ENCODE measurements at regions of chr1 and their contacts with region 1.

Region 1: GRCh38 chr1:100249537-100250257 is at the start of gene DBT:
- DNase-seq: peak; percentile 80 to 95
- ATAC-seq: peak; percentile 99 to 100 (median 100)
- H3K4me3 ChIP-seq: peak within 1 kb of the TSS; percentile 84
- H3K4me3 Mint-ChIP-seq: no peak within 1 kb of the TSS
- H3K27ac ChIP-seq: peak within 1 kb of the TSS; percentile 74
- H3K27ac Mint-ChIP-seq: no peak within 1 kb of the TSS
- H3K4me1 ChIP-seq: peaks cover 7% of the 10 kb centered on the region
- H3K4me1 Mint-ChIP-seq: peaks cover 0 to 10% of the 10 kb centered on the region in 2 donors
- H3K27me3 ChIP-seq: no peaks in the 10 kb centered on the region
- H3K27me3 Mint-ChIP-seq: peaks cover 3 to 10% of the 10 kb centered on the region in 2 donors
- CTCF ChIP-seq: no peak
- total RNA-seq, gene DBT: 9.9 to 11.5 (median 10.2) TPM

Region 2: GRCh38 chr1:100229681-100230443 is 19.8 kb before region 1 on chr1:
- intact Hi-C with region 1: no loop called
- DNase-seq: no peak
- ATAC-seq: no peak
- H3K4me3 ChIP-seq: no peak overlapping the region
- H3K4me3 Mint-ChIP-seq: no peak overlapping the region
- H3K27ac ChIP-seq: no peak overlapping the region
- H3K27ac Mint-ChIP-seq: no peak overlapping the region
- H3K4me1 ChIP-seq: no peaks in the 10 kb centered on the region
- H3K4me1 Mint-ChIP-seq: no peaks in the 10 kb centered on the region
- H3K27me3 ChIP-seq: no peaks in the 10 kb centered on the region
- H3K27me3 Mint-ChIP-seq: no peaks in the 10 kb centered on the region
- CTCF ChIP-seq: no peak

Region 3: GRCh38 chr1:100265931-100266740 is 16.4 kb after region 1 on chr1 and contains the start of gene RTCA:
- intact Hi-C with region 1: loop called (anchors 1 kb)
- DNase-seq: peak; percentile 93 to 99
- ATAC-seq: peak; percentile 93 to 98 (median 94)
- H3K4me3 ChIP-seq: peak within 1 kb of the TSS; percentile 86
- H3K4me3 Mint-ChIP-seq: peak within 1 kb of the TSS; percentile 100
- H3K27ac ChIP-seq: peak within 1 kb of the TSS; percentile 77
- H3K27ac Mint-ChIP-seq: peak within 1 kb of the TSS; percentile 97 to 99
- H3K4me1 ChIP-seq: peaks cover 32% of the 10 kb centered on the region
- H3K4me1 Mint-ChIP-seq: peaks cover 46 to 47% of the 10 kb centered on the region in 2 donors
- H3K27me3 ChIP-seq: no peaks in the 10 kb centered on the region
- H3K27me3 Mint-ChIP-seq: no peaks in the 10 kb centered on the region
- CTCF ChIP-seq: no peak
- total RNA-seq, gene RTCA: 49.3 to 60.8 (median 52.3) TPM

Region 4: DNA sequence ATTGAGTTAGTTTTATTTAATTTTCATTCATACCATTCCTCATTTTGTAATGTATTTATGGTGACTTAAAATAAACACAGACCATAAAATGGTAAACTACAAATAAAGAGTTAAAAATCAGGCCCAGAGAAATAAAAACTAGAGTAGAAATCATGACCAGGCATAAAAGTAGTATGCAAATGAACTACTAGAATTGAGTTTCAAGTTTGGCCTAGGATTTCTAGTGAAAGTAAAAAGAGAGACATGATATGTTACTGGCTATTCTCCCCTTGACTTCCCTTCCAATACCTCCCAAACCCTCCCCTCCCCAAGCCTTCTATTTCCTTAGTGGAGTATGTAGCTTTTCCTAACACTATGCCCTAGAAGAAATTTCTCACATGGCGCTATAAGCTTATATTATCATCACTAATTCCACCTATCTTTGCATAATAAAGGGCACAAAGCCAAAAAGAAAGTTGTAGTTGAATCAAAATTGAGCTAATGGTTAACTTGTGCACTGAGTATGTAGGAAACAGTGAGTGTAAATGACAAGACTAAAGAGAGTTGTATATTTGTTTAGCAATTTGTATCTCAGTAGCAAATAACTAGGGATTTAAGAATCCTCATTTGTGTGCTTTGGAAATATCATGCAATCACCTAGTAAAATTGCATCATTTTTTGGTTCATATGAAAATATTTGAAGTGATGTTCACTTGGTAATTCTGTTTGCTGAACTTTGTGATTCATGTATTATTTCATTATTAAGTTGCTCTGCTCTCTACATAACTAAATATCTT is 72.9 kb after region 1 on chr1:
- intact Hi-C with region 1: no loop called
- DNase-seq: no peak
- ATAC-seq: no peak
- H3K4me3 ChIP-seq: no peak overlapping the region
- H3K4me3 Mint-ChIP-seq: no peak overlapping the region
- H3K27ac ChIP-seq: no peak overlapping the region
- H3K27ac Mint-ChIP-seq: no peak overlapping the region
- H3K4me1 ChIP-seq: no peaks in the 10 kb centered on the region
- H3K4me1 Mint-ChIP-seq: no peaks in the 10 kb centered on the region
- H3K27me3 ChIP-seq: no peaks in the 10 kb centered on the region
- H3K27me3 Mint-ChIP-seq: no peaks in the 10 kb centered on the region
- CTCF ChIP-seq: no peak

Region 5: GRCh38 chr1:100360790-100361510 is 111.3 kb after region 1 on chr1:
- intact Hi-C with region 1: no loop called
- DNase-seq: no peak
- ATAC-seq: no peak
- H3K4me3 ChIP-seq: no peak overlapping the region
- H3K4me3 Mint-ChIP-seq: no peak overlapping the region
- H3K27ac ChIP-seq: no peak overlapping the region
- H3K27ac Mint-ChIP-seq: peak overlapping the region; percentile 11 to 27
- H3K4me1 ChIP-seq: peaks cover 31% of the 10 kb centered on the region
- H3K4me1 Mint-ChIP-seq: peaks cover 55 to 58% of the 10 kb centered on the region in 2 donors
- H3K27me3 ChIP-seq: no peaks in the 10 kb centered on the region
- H3K27me3 Mint-ChIP-seq: no peaks in the 10 kb centered on the region
- CTCF ChIP-seq: no peak

Measured in natural killer cell (primary cell).